ENCODE measurements at regions of chr9 and their contacts with region 1.

Region 1: GRCh38 chr9:81689343-81690190 is at the start of gene TLE1:
- DNase-seq: peak; percentile 98
- H3K4me3 ChIP-seq: peak within 1 kb of the TSS; percentile 81 to 98 (median 88)
- H3K27ac ChIP-seq: peak within 1 kb of the TSS; percentile 72 to 90 (median 86)
- H3K4me1 ChIP-seq: peaks cover 22 to 55% (median 37%) of the 10 kb centered on the region in 6 donors
- H3K27me3 ChIP-seq: peaks cover 0 to 63% (median 0%) of the 10 kb centered on the region in 7 donors
- CTCF ChIP-seq: peak in 2 of 11 experiments; percentile 7 to 22
- POLR2A ChIP-seq: peak; percentile 58 to 91 (median 82)
- total RNA-seq, gene TLE1: 34.7 to 110 (median 68.2) TPM

Region 2: DNA sequence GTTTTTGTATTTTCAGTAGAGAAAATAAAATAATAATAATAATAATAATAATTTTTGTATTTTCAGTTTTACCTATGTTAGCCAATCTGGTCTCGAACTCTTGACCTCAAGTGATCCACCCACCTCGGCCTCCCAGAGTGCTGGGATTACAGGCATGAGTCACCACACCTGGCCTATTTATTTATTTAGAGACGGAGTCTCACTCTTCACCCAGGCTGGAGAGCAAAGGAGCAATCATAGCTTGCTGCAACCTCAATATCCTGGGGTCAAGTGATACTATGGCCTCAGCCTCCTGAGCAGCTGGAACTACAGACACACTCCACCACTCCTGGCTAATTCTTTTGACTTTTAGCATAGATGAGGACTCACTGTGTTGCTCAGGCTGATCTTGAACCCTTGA is 167.7 kb before region 1 on chr9:
- intact Hi-C with region 1: loop called (anchors 5 kb)
- DNase-seq: no peak
- H3K4me3 ChIP-seq: no peak overlapping the region
- H3K27ac ChIP-seq: no peak overlapping the region
- H3K4me1 ChIP-seq: peaks cover 0 to 19% (median 5%) of the 10 kb centered on the region in 6 donors
- H3K27me3 ChIP-seq: no peaks in the 10 kb centered on the region
- CTCF ChIP-seq: no peak
- POLR2A ChIP-seq: no peak

Region 3: GRCh38 chr9:81592887-81593266 is 96.7 kb before region 1 on chr9:
- intact Hi-C with region 1: loop called (anchors 10 kb)
- DNase-seq: peak; percentile 86
- H3K4me3 ChIP-seq: no peak overlapping the region
- H3K27ac ChIP-seq: peak overlapping the region in 7 of 8 donors; percentile 40 to 61 (median 55)
- H3K4me1 ChIP-seq: peaks cover 12 to 70% (median 48%) of the 10 kb centered on the region in 6 donors
- H3K27me3 ChIP-seq: no peaks in the 10 kb centered on the region
- CTCF ChIP-seq: no peak
- POLR2A ChIP-seq: no peak

Measured in spleen (tissue), 13 donors.